SK-N-SH (cell line): ENCODE measurements at regions of chr2 and their contacts with region 1.

Region 1: GRCh38 chr2:60998628-60999545 is 18.6 kb upstream of the PEX13 start:
- DNase-seq: peak; percentile 52
- H3K4me3 ChIP-seq: peak overlapping the region in 1 of 2 experiments; percentile 21; a peak in 1 of 4 replicates
- H3K27ac ChIP-seq: no peak overlapping the region
- H3K4me1 ChIP-seq: no peaks in the 10 kb centered on the region
- H3K27me3 ChIP-seq: no peaks in the 10 kb centered on the region
- CTCF ChIP-seq: peak; percentile 78
- EP300 ChIP-seq: no peak
- RAD21 ChIP-seq: peak; percentile 88

Region 2: DNA sequence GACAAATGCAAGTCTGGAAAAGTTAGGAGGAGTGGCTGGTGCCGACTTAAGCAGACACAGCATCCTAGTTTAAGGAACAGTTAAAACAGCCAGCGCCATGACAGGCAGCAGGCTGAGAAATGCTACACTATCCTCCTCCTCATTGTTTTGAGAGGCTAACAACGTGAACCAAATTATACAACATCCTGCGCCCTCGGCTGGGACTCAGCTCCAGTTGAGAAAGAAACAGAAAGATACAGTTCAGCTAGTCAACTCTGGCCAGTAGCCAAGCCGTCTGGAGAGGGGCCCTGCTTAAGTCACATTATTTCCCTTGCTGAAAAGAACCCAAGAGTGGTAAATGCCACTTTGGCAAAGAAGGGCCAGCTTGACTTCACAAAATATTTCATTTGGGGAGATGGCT is 535.6 kb before region 1 on chr2:
- CTCF ChIA-PET with region 1: no interaction called
- POLR2A ChIA-PET with region 1: no interaction called
- DNase-seq: no peak
- H3K4me3 ChIP-seq: 0 out of 4 replicates have a peak overlapping the region, but pooled peaks of 1 of the 2 experiments have one; percentile 4
- H3K27ac ChIP-seq: no peak overlapping the region
- H3K4me1 ChIP-seq: no peaks in the 10 kb centered on the region
- H3K27me3 ChIP-seq: no peaks in the 10 kb centered on the region
- CTCF ChIP-seq: no peak
- EP300 ChIP-seq: no peak
- RAD21 ChIP-seq: no peak

Region 3: GRCh38 chr2:60707750-60708371 is 291.0 kb before region 1 on chr2:
- CTCF ChIA-PET with region 1: interaction called, 107 read pairs
- POLR2A ChIA-PET with region 1: no interaction called
- DNase-seq: peak; percentile 52
- H3K4me3 ChIP-seq: no peak overlapping the region; a peak in 1 of 4 replicates
- H3K27ac ChIP-seq: no peak overlapping the region
- H3K4me1 ChIP-seq: no peaks in the 10 kb centered on the region
- H3K27me3 ChIP-seq: no peaks in the 10 kb centered on the region
- CTCF ChIP-seq: peak; percentile 86
- EP300 ChIP-seq: no peak
- RAD21 ChIP-seq: peak; percentile 78

Region 4: DNA sequence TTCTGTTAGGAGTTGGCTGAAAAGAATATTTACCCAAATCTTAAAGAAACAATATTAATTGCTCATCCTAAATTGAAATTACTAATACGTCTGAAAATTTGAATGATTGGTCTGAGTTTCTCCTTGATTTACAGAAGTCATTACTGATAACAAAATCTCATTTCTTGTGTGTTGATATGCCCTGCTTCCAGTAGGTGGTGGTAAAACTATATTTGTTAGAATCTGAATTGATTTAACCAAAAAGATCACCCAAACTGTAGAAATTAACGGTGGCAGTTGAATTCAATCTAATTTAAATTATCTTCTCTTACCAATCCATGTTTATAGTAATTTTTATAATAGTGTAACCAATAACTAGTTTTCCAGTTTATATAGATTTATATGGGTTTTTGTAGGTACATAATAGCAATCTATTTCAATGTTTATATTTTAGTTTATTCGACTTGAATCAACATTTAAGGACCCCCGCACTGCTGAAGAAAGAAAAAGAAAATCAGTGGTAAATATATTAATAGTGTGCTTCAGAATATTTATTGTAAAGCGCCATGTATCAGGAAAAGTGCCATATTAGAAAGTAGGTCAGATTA is 204.5 kb before region 1 on chr2:
- CTCF ChIA-PET with region 1: interaction called, 23 read pairs
- POLR2A ChIA-PET with region 1: no interaction called
- DNase-seq: peak; percentile 48
- H3K4me3 ChIP-seq: no peak overlapping the region
- H3K27ac ChIP-seq: no peak overlapping the region
- H3K4me1 ChIP-seq: no peaks in the 10 kb centered on the region; a peak in 1 of 4 replicates
- H3K27me3 ChIP-seq: no peaks in the 10 kb centered on the region
- CTCF ChIP-seq: peak; percentile 70
- EP300 ChIP-seq: no peak
- RAD21 ChIP-seq: peak; percentile 73

Region 5: DNA sequence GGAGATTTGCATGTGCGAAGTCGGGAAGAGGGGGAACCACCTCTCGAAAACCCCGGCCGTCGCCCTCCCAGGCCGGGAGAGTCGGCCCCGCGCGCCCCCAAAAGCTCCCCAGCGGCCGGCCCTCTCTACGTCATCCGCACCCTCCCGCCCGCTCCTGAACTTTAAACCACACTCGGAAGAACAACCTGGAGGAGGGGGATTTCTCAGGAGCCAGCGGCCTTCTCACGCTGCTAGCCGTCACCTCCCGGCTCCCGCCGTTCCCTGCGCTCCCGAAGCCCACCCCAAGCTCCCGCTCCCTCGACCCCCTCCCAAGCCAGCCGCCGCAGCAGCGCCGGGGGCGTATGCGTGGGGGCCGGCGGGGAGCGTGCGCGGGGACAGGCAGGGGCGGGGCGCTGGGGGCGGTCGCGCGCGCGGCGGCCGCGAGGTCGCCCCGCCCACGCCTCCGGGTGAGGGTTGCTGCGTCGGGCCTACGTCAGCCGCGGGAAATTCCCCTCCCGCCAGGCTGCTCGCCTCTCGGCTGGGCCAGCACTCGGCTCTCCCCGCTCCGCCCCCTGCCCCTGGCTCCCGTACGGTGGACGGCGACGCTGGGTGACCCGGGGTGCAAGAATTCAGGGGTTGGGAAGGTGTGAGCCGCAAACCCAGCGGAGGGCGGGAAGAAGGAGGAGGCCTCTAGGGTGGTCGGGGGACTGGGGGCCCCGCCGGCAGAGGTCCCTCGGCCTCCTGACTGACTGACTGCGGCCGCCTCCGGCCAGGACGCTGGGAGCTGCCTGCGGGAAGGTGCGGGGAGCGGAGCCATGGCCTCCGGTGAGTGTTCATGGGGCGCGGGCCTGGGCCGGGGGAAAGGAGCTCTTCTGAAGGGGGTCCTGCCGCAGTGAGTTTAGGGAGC is 117.6 kb before region 1 on chr2 and contains the start of gene REL:
- CTCF ChIA-PET with region 1: interaction called, 11 read pairs
- POLR2A ChIA-PET with region 1: no interaction called
- DNase-seq: peak; percentile 95
- H3K4me3 ChIP-seq: peak within 1 kb of the TSS; percentile 89 to 93
- H3K27ac ChIP-seq: peak within 1 kb of the TSS; percentile 86 to 91
- H3K4me1 ChIP-seq: peaks cover 4 to 11% of the 10 kb centered on the region in 2 experiments; a peak in 3 of 4 replicates
- H3K27me3 ChIP-seq: no peaks in the 10 kb centered on the region
- CTCF ChIP-seq: no peak
- EP300 ChIP-seq: no peak
- RAD21 ChIP-seq: no peak
- polyA plus RNA-seq, gene REL: 0.59 and 0.96 TPM in 2 replicates

Region 6: GRCh38 chr2:60899230-60899891 is 99.5 kb before region 1 on chr2:
- CTCF ChIA-PET with region 1: no interaction called
- POLR2A ChIA-PET with region 1: no interaction called
- DNase-seq: no peak
- H3K4me3 ChIP-seq: no peak overlapping the region
- H3K27ac ChIP-seq: no peak overlapping the region
- H3K4me1 ChIP-seq: no peaks in the 10 kb centered on the region
- H3K27me3 ChIP-seq: no peaks in the 10 kb centered on the region
- CTCF ChIP-seq: no peak
- EP300 ChIP-seq: no peak
- RAD21 ChIP-seq: no peak

Region 7: GRCh38 chr2:60948926-60949579 is 49.8 kb before region 1 on chr2:
- CTCF ChIA-PET with region 1: no interaction called
- POLR2A ChIA-PET with region 1: no interaction called
- DNase-seq: no peak
- H3K4me3 ChIP-seq: no peak overlapping the region
- H3K27ac ChIP-seq: no peak overlapping the region
- H3K4me1 ChIP-seq: no peaks in the 10 kb centered on the region
- H3K27me3 ChIP-seq: no peaks in the 10 kb centered on the region
- CTCF ChIP-seq: no peak
- EP300 ChIP-seq: no peak
- RAD21 ChIP-seq: no peak

Region 8: DNA sequence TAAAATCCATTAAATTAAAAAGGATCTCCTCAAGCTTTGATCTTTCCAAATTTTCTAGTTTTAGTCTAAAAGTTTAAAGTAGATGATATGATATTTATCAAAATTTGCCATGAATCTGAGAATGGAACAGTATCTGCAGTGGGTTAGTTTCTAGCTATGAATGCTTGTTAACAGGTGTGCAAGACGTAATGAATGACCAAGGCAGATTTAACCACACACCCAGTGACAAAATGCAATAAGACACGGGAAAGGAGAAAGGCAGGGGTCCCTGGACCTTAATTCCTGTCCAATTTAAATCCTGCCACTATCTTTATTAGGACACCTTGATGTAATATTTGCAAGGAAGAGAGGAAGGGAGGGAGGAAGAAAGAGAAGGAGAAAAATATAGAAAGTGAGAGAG is 11.8 kb before region 1 on chr2:
- CTCF ChIA-PET with region 1: interaction called, 17 read pairs
- POLR2A ChIA-PET with region 1: no interaction called
- DNase-seq: no peak
- H3K4me3 ChIP-seq: no peak overlapping the region
- H3K27ac ChIP-seq: no peak overlapping the region
- H3K4me1 ChIP-seq: no peaks in the 10 kb centered on the region
- H3K27me3 ChIP-seq: no peaks in the 10 kb centered on the region
- CTCF ChIP-seq: no peak
- EP300 ChIP-seq: no peak
- RAD21 ChIP-seq: no peak